ENCODE measurements at regions of chr4 and their contacts with region 1.

Region 1: GRCh38 chr4:25330905-25331808 is 18.6 kb downstream of the ZCCHC4 start:
- DNase-seq: no peak
- H3K4me3 ChIP-seq: no peak overlapping the region
- H3K27ac ChIP-seq: no peak overlapping the region
- H3K4me1 ChIP-seq: no peaks in the 10 kb centered on the region
- H3K27me3 ChIP-seq: no peaks in the 10 kb centered on the region
- CTCF ChIP-seq: no peak
- POLR2A ChIP-seq: no peak

Region 2: GRCh38 chr4:25271866-25272265 is 59.3 kb before region 1 on chr4:
- intact Hi-C with region 1: loop called (anchors 2 kb)
- DNase-seq: no peak
- H3K4me3 ChIP-seq: no peak overlapping the region
- H3K27ac ChIP-seq: no peak overlapping the region
- H3K4me1 ChIP-seq: no peaks in the 10 kb centered on the region
- H3K27me3 ChIP-seq: no peaks in the 10 kb centered on the region
- CTCF ChIP-seq: no peak
- POLR2A ChIP-seq: no peak

Region 3: GRCh38 chr4:25312496-25313200 is 18.5 kb before region 1 on chr4 and contains the start of gene ZCCHC4:
- intact Hi-C with region 1: no loop called
- DNase-seq: peak; percentile 84 to 86
- H3K4me3 ChIP-seq: peak within 1 kb of the TSS; percentile 69 to 82 (median 72)
- H3K27ac ChIP-seq: peak within 1 kb of the TSS; percentile 78 to 82
- H3K4me1 ChIP-seq: peaks cover 0 to 5% of the 10 kb centered on the region in 2 donors
- H3K27me3 ChIP-seq: no peaks in the 10 kb centered on the region
- CTCF ChIP-seq: peak; percentile 59 to 95 (median 70)
- POLR2A ChIP-seq: no peak
- total RNA-seq, gene ZCCHC4: 10.7 to 32.1 (median 18.7) TPM

Measured in breast epithelium (tissue), 4 donors.